ENCODE measurements at regions of chr18 and their contacts with region 1.

Region 1: DNA sequence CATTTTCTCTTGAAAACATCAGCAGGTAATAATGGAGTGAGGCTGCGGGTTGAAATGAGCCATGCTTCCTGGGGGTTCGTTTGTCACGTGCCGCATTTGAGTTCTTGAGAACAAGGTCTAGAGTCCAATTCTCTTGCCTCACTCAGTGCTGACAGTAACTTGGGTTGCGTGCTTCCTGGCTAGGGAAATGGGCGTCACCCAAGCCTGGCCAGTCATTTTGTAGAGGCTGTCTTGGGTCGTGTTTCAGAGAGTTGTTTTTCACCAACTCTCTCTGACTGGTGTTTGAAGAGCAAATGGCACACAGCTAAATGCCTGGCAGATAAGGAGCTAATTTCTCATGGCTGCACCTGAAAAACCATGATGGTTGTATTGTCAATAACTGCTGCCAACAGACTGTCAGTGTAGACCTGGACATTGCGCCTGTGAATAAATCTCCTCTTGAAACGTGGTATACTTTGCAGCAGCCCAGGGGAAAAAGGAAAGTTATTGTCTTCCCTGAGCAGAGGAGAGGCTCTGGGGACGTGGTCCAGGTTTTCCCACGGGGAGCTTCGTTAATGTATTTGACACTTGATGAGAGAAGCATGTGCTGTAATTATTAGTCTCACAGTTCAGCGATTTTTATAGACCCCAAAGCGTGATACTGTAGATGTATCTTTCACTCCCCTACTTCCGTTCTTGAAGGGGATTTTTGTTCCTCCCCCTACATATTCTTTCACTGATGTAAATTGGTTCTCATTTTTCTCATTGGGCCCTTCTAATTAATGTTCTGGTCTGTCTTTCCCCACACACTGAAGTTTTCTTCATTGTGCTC is 196.0 kb downstream of the FHOD3 start:
- DNase-seq: no peak
- ATAC-seq: peak; percentile 81
- H3K4me3 ChIP-seq: no peak overlapping the region
- H3K27ac ChIP-seq: no peak overlapping the region
- H3K4me1 ChIP-seq: peaks cover 7% of the 10 kb centered on the region
- H3K27me3 ChIP-seq: no peaks in the 10 kb centered on the region
- CTCF ChIP-seq: no peak
- EP300 ChIP-seq: no peak; a peak in 1 of 4 replicates
- POLR2A ChIP-seq: no peak
- RAD21 ChIP-seq: no peak

Region 2: DNA sequence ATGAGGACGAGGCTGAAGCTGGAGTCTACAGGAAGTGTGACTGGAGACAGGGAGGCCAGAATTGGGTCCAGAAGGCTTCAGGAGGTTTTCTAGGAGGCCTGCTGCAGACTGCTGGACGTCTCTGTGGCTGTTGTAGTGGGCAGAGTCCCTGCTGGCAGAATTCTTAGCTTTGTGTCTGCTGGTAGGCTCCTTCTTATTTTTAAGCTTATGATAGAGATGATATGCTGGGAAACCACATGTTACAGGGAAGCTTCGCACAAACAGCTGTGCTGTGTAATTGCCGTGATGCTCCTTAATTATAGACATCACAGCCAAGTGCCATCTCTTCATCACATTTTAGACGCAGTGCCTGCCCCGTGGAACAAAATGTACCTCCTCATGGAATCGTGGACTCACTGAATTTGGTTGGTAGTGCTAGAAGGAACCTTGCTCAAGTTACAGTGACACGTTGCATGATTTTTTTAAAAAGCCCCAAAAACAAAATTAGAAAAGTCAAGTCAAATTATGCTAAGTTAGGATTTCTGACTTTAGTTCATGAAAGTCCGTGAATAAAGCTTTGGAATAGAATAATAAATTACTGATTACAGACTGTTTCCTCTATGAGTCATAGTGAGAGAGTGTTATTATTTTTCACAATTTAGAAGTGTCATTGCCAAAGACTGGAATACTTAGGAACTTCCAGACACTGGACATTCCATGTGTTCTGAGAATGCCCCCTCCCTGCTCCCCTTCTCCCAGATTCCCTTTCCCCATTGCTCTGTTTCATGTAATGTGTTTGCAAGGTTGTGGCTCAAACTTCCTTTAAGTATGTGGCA is 51.9 kb before region 1 on chr18:
- CTCF ChIA-PET with region 1: no interaction called
- POLR2A ChIA-PET with region 1: interaction called, 7 read pairs
- RAD21 ChIA-PET with region 1: interaction called, 10 read pairs
- SMC1A ChIA-PET with region 1: interaction called, 37 read pairs
- in situ Hi-C with region 1: no loop called
- intact Hi-C with region 1: no loop called
- DNase-seq: no peak
- ATAC-seq: peak; percentile 10; the same call in 2 of the 3 replicates
- H3K4me3 ChIP-seq: no peak overlapping the region
- H3K27ac ChIP-seq: no peak overlapping the region
- H3K4me1 ChIP-seq: no peaks in the 10 kb centered on the region
- H3K27me3 ChIP-seq: no peaks in the 10 kb centered on the region
- CTCF ChIP-seq: no peak
- EP300 ChIP-seq: peak in 1 of 2 experiments; percentile 16; a peak in 1 of 4 replicates
- POLR2A ChIP-seq: no peak
- RAD21 ChIP-seq: no peak

Region 3: GRCh38 chr18:36468161-36468560 is 25.4 kb before region 1 on chr18:
- CTCF ChIA-PET with region 1: interaction called, 4 read pairs
- POLR2A ChIA-PET with region 1: interaction called, 6 read pairs
- RAD21 ChIA-PET with region 1: interaction called, 5 read pairs
- SMC1A ChIA-PET with region 1: interaction called, 11 read pairs
- in situ Hi-C with region 1: no loop called
- intact Hi-C with region 1: no loop called
- DNase-seq: no peak
- ATAC-seq: no peak
- H3K4me3 ChIP-seq: no peak overlapping the region
- H3K27ac ChIP-seq: no peak overlapping the region
- H3K4me1 ChIP-seq: peaks cover 3% of the 10 kb centered on the region; the same call in 1 of the 2 replicates
- H3K27me3 ChIP-seq: no peaks in the 10 kb centered on the region
- CTCF ChIP-seq: no peak
- EP300 ChIP-seq: no peak
- POLR2A ChIP-seq: no peak
- RAD21 ChIP-seq: no peak

Region 4: GRCh38 chr18:36511791-36512352 is 18.3 kb after region 1 on chr18:
- CTCF ChIA-PET with region 1: interaction called, 7 read pairs
- POLR2A ChIA-PET with region 1: interaction called, 5 read pairs
- RAD21 ChIA-PET with region 1: interaction called, 4 read pairs
- SMC1A ChIA-PET with region 1: interaction called, 20 read pairs
- in situ Hi-C with region 1: no loop called
- intact Hi-C with region 1: loop called (anchors 2 kb)
- DNase-seq: no peak
- ATAC-seq: peak; percentile 37
- H3K4me3 ChIP-seq: no peak overlapping the region
- H3K27ac ChIP-seq: no peak overlapping the region
- H3K4me1 ChIP-seq: no peaks in the 10 kb centered on the region; the same call in 1 of the 2 replicates
- H3K27me3 ChIP-seq: no peaks in the 10 kb centered on the region
- CTCF ChIP-seq: no peak
- EP300 ChIP-seq: no peak
- POLR2A ChIP-seq: no peak
- RAD21 ChIP-seq: no peak

Region 5: GRCh38 chr18:36582988-36583745 is 89.6 kb after region 1 on chr18:
- CTCF ChIA-PET with region 1: no interaction called
- POLR2A ChIA-PET with region 1: no interaction called
- RAD21 ChIA-PET with region 1: no interaction called
- SMC1A ChIA-PET with region 1: no interaction called
- in situ Hi-C with region 1: no loop called
- intact Hi-C with region 1: no loop called
- DNase-seq: peak; percentile 17
- ATAC-seq: peak; percentile 97
- H3K4me3 ChIP-seq: no peak overlapping the region
- H3K27ac ChIP-seq: no peak overlapping the region
- H3K4me1 ChIP-seq: peaks cover 8% of the 10 kb centered on the region
- H3K27me3 ChIP-seq: no peaks in the 10 kb centered on the region
- CTCF ChIP-seq: peak; percentile 14 to 38 (median 22); a peak in 3 of 6 replicates
- EP300 ChIP-seq: no peak
- POLR2A ChIP-seq: no peak
- RAD21 ChIP-seq: 0 out of 2 replicates have a peak, but pooled peaks have one; percentile 10

Region 6: GRCh38 chr18:36624451-36625167 is 131.1 kb after region 1 on chr18:
- CTCF ChIA-PET with region 1: no interaction called
- POLR2A ChIA-PET with region 1: no interaction called
- RAD21 ChIA-PET with region 1: no interaction called
- SMC1A ChIA-PET with region 1: no interaction called
- in situ Hi-C with region 1: no loop called
- intact Hi-C with region 1: no loop called
- DNase-seq: no peak
- ATAC-seq: no peak
- H3K4me3 ChIP-seq: no peak overlapping the region
- H3K27ac ChIP-seq: no peak overlapping the region
- H3K4me1 ChIP-seq: no peaks in the 10 kb centered on the region
- H3K27me3 ChIP-seq: no peaks in the 10 kb centered on the region
- CTCF ChIP-seq: no peak
- EP300 ChIP-seq: no peak
- POLR2A ChIP-seq: no peak
- RAD21 ChIP-seq: no peak

Region 7: DNA sequence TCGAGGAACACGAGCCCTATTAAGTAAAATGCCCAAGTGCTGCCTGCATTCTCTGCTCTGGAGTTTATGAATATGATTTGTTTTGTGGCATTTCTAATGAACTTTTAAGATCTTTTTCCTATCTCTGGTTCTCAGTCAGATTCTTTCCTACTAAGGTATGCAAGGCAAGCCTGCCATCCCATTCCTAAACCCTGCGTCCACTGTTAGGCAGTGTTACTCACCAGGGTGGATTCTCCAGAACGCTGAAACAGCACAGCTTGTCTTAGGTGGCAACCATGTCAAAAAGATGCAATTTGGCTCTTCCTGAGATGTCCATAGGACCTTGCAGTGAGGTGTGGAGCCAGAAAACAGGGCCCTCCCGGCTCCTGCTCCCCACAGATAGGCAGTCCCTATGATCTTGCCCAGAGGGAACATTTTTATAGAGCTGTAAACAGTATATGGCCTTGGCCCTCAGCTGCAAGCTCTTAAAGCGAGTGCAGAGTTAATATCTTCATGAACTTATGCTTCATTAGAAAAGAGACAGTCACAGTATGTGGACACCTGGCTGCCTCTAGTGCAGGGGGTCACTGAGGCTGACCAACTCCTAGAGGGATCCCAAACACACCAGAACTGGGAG is 250.8 kb after region 1 on chr18:
- CTCF ChIA-PET with region 1: no interaction called
- POLR2A ChIA-PET with region 1: no interaction called
- RAD21 ChIA-PET with region 1: no interaction called
- SMC1A ChIA-PET with region 1: no interaction called
- in situ Hi-C with region 1: no loop called
- intact Hi-C with region 1: no loop called
- DNase-seq: no peak
- ATAC-seq: no peak
- H3K4me3 ChIP-seq: no peak overlapping the region
- H3K27ac ChIP-seq: no peak overlapping the region
- H3K4me1 ChIP-seq: peaks cover 2% of the 10 kb centered on the region
- H3K27me3 ChIP-seq: no peaks in the 10 kb centered on the region
- CTCF ChIP-seq: no peak
- EP300 ChIP-seq: no peak
- POLR2A ChIP-seq: no peak
- RAD21 ChIP-seq: no peak